Stomach (tissue), 19 donors: ENCODE measurements at regions of chr16 and their contacts with region 1.

Region 1: GRCh38 chr16:19086322-19087199 is 19.1 kb downstream of the COQ7 start:
- DNase-seq: peak; percentile 89 to 96
- H3K4me3 ChIP-seq: peak overlapping the region; percentile 37 to 44 (median 42)
- H3K27ac ChIP-seq: peak overlapping the region in 2 of 5 donors; percentile 24 to 36
- H3K4me1 ChIP-seq: peaks cover 14 to 17% (median 15%) of the 10 kb centered on the region in 4 donors
- H3K27me3 ChIP-seq: no peaks in the 10 kb centered on the region
- CTCF ChIP-seq: peak in 5 of 7 experiments; percentile 88 to 99 (median 97)
- EP300 ChIP-seq: no peak
- POLR2A ChIP-seq: no peak

Region 2: DNA sequence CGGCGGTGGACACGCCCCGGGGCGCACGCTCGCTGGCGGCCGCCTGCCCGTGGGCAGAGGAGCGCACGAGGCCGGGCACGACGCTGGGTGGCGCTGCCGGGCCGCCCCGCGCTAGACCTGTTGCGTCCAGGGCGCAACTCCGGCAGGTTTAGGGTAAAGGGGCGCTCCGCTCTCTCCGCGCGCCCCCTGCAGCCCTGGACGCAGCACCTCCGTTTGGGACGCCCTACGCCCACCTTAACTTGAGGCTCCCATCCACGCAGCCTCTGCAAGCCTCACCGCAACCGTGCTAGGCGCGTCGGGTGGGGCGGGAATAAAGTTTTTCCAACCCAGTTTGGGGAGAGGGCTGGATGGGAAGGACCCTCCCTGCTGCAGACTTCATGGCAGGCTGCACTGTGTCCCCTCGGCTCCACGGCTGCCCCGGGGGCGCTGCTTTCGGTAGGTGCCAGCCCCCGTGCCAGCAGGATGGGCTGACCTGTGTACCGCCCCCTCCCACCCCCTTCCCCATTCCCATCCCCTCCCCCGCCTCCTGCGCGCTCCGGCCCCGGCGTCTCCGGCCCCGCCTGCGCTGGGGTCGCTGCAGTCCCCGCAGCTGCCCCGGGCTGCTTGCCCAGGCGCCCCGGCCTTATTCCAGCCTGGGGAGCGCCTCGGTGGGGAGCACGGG is 81.3 kb after region 1 on chr16 and contains the start of gene SYT17:
- intact Hi-C with region 1: loop called (anchors 5 kb)
- DNase-seq: peak; percentile 81 to 95
- H3K4me3 ChIP-seq: peak within 1 kb of the TSS; percentile 56 to 90 (median 76)
- H3K27ac ChIP-seq: peak within 1 kb of the TSS; percentile 33 to 82 (median 76)
- H3K4me1 ChIP-seq: peaks cover 10 to 33% (median 22%) of the 10 kb centered on the region in 4 donors
- H3K27me3 ChIP-seq: peaks cover 0 to 33% (median 21%) of the 10 kb centered on the region in 3 donors
- CTCF ChIP-seq: peak in 4 of 7 experiments; percentile 28 to 86 (median 76)
- EP300 ChIP-seq: no peak
- POLR2A ChIP-seq: no peak
- total RNA-seq, gene SYT17: 8.1 to 37.1 (median 18.7) TPM